B cell (primary cell): ENCODE measurements at regions of chr17 and their contacts with region 1.

Region 1: DNA sequence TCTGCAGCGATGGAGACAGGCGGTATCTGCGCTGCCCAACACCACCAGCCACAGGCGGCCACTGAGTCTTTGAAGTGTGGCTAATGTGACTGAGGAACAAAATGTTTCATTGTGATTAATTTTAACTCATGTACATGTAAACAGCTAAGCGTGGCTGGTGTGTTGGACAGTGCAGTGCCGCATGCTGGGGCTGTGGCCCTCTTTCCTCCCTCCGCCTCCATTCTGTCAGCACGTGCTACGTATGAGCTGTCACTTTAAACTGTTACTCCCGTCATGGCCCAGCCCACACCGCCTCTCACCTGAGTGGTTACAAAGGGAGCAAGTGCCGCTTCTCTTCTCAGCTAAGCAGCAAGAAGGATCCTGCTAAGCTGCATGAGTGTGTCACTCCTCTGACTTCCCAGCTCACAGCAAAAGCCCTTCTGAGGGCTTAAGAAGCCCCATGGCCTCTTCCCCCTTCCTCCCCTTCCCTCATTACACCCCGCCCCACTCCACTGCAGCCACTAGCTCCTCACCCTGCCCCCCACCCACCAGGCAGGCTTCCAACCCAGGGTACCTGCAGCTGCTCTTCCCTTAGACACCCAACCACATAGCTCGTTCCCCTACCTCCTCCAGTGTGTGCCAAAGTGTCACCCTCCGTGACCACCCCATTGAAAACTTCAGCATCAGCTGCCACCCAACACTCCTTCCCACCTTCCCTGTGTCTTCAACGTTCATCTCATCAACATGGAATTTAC is 15.0 kb downstream of the HASPIN start:
- DNase-seq: peak; percentile 44
- ATAC-seq: peak; percentile 44
- H3K4me3 ChIP-seq: no peak overlapping the region
- H3K4me3 Mint-ChIP-seq: no peak overlapping the region
- H3K27ac ChIP-seq: no peak overlapping the region
- H3K27ac Mint-ChIP-seq: peak overlapping the region; percentile 43
- H3K4me1 ChIP-seq: peaks cover 7 to 32% of the 10 kb centered on the region in 2 donors
- H3K4me1 Mint-ChIP-seq: peaks cover 38% of the 10 kb centered on the region
- H3K27me3 ChIP-seq: no peaks in the 10 kb centered on the region
- H3K27me3 Mint-ChIP-seq: no peaks in the 10 kb centered on the region
- CTCF ChIP-seq: no peak

Region 2: DNA sequence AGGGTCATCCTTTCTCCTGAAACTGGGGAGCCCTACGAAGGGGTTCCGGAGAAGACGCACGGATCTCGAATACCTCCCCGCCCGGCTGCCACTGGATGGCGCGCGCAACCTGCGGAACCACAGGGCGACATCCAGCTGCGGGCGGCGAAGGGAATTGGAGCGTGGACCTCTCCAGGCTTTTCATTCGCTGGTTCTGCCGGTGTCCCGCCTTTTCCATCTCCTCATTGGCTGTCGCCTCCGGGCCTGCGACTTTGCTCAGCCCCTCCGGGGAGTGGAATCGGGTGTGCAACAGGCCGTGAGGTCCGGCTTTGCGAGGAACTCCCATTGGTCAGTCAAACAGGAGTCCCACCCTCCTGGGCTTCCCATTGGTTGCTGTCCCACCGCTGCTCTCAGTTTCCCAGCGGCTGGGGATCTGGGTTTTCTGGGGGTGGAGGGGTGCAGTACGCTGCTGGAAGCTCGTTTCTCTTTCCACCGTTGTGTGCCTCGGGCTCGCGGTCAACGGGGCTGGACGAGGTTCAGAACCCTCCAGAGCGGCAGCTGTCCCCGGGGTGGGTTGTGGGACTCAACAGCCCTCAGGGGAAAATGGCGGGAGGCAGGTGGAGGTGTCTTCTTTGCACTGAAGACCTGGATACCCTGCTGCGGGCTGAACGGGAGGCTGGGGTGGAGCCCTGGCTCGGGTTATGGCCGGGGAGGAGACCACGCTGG is 689.8 kb before region 1 on chr17:
- CTCF ChIA-PET with region 1: interaction called, 3 read pairs
- POLR2A ChIA-PET with region 1: no interaction called
- intact Hi-C with region 1: loop called (anchors 5 kb)
- DNase-seq: peak; percentile 96
- ATAC-seq: peak; percentile 97
- H3K4me3 ChIP-seq: peak overlapping the region; percentile 36 to 84 (median 76)
- H3K4me3 Mint-ChIP-seq: peak overlapping the region; percentile 93
- H3K27ac ChIP-seq: peak overlapping the region in 1 of 2 donors; percentile 7
- H3K27ac Mint-ChIP-seq: peak overlapping the region; percentile 86
- H3K4me1 ChIP-seq: peaks cover 6 to 13% of the 10 kb centered on the region in 2 donors
- H3K4me1 Mint-ChIP-seq: peaks cover 7% of the 10 kb centered on the region
- H3K27me3 ChIP-seq: peaks cover 0 to under 1% (median 0%) of the 10 kb centered on the region in 4 experiments
- H3K27me3 Mint-ChIP-seq: no peaks in the 10 kb centered on the region
- CTCF ChIP-seq: peak; percentile 76

Region 3: GRCh38 chr17:3583456-3583855 is 155.3 kb before region 1 on chr17:
- CTCF ChIA-PET with region 1: no interaction called
- POLR2A ChIA-PET with region 1: no interaction called
- intact Hi-C with region 1: no loop called
- DNase-seq: no peak
- ATAC-seq: no peak
- H3K4me3 ChIP-seq: no peak overlapping the region
- H3K4me3 Mint-ChIP-seq: no peak overlapping the region
- H3K27ac ChIP-seq: no peak overlapping the region
- H3K27ac Mint-ChIP-seq: no peak overlapping the region
- H3K4me1 ChIP-seq: no peaks in the 10 kb centered on the region
- H3K4me1 Mint-ChIP-seq: no peaks in the 10 kb centered on the region
- H3K27me3 ChIP-seq: no peaks in the 10 kb centered on the region
- H3K27me3 Mint-ChIP-seq: no peaks in the 10 kb centered on the region
- CTCF ChIP-seq: no peak

Region 4: DNA sequence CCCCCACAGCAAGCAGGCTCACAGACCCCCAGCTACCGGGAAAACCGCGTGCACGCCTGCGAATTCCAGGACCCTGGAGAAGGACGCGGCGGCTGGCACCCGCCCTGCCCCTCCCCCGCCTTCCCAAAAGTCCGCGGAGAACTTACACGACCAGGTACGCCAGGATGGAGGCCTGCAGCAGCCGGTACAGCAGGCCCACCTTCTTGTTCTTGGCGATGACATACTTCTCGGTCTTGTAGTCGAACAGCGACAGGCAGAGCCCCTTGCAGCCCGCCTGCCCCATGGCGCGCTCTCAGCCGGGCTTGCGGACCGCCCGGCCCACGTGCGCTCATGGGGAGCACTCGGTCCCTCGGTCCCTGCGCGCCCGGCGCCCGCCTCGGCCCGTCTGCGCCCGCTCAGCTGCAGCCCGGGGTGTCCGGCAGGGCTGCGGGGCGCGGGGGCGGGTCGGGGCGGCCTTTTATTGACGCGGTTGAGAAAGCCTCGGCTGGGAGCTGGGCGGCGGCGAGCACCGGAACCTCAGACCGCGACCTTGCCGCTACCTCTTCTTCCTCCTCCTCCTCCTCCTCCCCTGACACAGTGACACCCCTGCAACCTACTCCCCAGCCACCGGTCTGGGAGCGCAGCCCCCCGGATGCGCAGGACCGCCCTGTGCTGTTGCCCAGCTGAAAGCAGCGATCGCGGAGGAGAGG is 42.9 kb before region 1 on chr17 and contains the start of gene P2RX5:
- CTCF ChIA-PET with region 1: interaction called, 52 read pairs
- POLR2A ChIA-PET with region 1: interaction called, 4 read pairs
- intact Hi-C with region 1: no loop called
- DNase-seq: peak; percentile 80
- ATAC-seq: peak; percentile 52
- H3K4me3 ChIP-seq: peak within 1 kb of the TSS; percentile 58 to 93 (median 83)
- H3K4me3 Mint-ChIP-seq: peak within 1 kb of the TSS; percentile 100
- H3K27ac ChIP-seq: peak within 1 kb of the TSS; percentile 76 to 91
- H3K27ac Mint-ChIP-seq: peak within 1 kb of the TSS; percentile 99
- H3K4me1 ChIP-seq: peaks cover 35 to 65% of the 10 kb centered on the region in 2 donors
- H3K4me1 Mint-ChIP-seq: peaks cover 61% of the 10 kb centered on the region
- H3K27me3 ChIP-seq: no peaks in the 10 kb centered on the region
- H3K27me3 Mint-ChIP-seq: no peaks in the 10 kb centered on the region
- CTCF ChIP-seq: no peak
- total RNA-seq, gene P2RX5: 405 and 410 TPM in 2 replicates

Region 5: DNA sequence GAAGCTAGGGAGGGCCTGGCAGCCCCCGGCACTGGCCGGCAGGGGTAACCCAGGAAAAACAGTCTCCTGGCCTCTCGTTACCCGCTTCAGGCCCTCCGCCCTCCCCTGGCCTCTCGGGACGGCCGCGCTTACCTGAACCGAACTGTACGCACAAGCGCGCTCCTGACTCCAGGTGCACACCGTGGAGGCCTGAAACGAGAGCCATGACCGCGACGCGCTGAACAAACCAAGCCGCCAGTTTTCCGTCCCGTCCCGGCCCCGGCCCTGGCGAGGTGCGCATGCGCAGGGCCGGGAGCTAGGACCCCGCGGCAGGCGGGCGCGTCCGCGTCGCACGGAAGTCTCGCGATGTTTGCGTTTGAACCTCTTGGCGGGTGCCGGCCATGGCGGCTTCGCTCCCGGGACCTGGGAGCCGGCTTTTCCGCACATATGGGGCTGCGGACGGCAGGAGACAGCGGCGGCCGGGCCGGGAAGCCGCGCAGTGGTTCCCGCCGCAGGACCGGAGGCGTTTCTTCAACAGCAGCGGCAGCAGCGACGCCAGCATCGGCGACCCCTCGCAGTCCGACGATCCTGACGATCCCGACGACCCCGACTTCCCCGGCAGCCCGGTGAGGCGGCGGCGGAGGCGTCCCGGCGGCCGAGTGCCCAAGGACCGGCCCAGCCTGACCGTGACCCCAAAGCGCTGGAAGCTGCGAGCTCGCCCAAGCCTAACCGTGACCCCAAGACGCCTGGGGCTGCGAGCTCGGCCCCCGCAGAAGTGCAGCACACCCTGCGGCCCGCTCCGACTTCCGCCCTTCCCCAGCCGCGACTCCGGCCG is 15.0 kb before region 1 on chr17 and contains the start of gene HASPIN:
- CTCF ChIA-PET with region 1: interaction called, 49 read pairs
- POLR2A ChIA-PET with region 1: no interaction called
- intact Hi-C with region 1: loop called (anchors 2 kb)
- DNase-seq: peak; percentile 95
- ATAC-seq: peak; percentile 72
- H3K4me3 ChIP-seq: peak within 1 kb of the TSS; percentile 76 to 96 (median 91)
- H3K4me3 Mint-ChIP-seq: peak within 1 kb of the TSS; percentile 96
- H3K27ac ChIP-seq: peak within 1 kb of the TSS; percentile 49 to 78
- H3K27ac Mint-ChIP-seq: peak within 1 kb of the TSS; percentile 94
- H3K4me1 ChIP-seq: peaks cover 48 to 69% of the 10 kb centered on the region in 2 donors
- H3K4me1 Mint-ChIP-seq: peaks cover 60% of the 10 kb centered on the region
- H3K27me3 ChIP-seq: no peaks in the 10 kb centered on the region
- H3K27me3 Mint-ChIP-seq: no peaks in the 10 kb centered on the region
- CTCF ChIP-seq: peak; percentile 26
- total RNA-seq, gene HASPIN: 2.4 and 3.1 TPM in 2 replicates

Region 6: DNA sequence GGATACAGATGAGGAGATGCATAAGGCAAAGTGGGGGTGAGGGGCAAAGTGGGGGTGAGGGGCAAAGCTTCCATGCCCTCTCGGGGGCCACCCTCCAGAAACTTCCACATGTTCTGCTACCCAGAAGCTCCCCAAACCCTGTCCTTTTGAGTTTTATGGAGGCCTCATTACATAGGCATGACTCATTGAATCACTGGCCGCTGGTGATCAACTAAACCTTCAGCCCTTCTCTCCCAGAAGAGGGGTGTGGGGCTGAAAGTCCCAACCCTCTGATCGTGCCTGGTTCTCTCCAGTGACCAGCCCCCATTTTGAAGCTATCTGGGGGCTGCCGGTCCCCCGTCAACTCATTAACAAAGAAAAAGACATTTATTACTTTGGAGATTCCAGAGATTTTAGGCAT is 34.8 kb after region 1 on chr17:
- CTCF ChIA-PET with region 1: interaction called, 176 read pairs
- POLR2A ChIA-PET with region 1: interaction called, 15 read pairs
- intact Hi-C with region 1: no loop called
- DNase-seq: no peak
- ATAC-seq: no peak
- H3K4me3 ChIP-seq: no peak overlapping the region
- H3K4me3 Mint-ChIP-seq: no peak overlapping the region
- H3K27ac ChIP-seq: no peak overlapping the region
- H3K27ac Mint-ChIP-seq: no peak overlapping the region
- H3K4me1 ChIP-seq: peaks cover 9 to 11% of the 10 kb centered on the region in 2 donors
- H3K4me1 Mint-ChIP-seq: peaks cover 18% of the 10 kb centered on the region
- H3K27me3 ChIP-seq: no peaks in the 10 kb centered on the region
- H3K27me3 Mint-ChIP-seq: no peaks in the 10 kb centered on the region
- CTCF ChIP-seq: no peak

Region 7: GRCh38 chr17:3812771-3813170 is 74.0 kb after region 1 on chr17:
- CTCF ChIA-PET with region 1: interaction called, 54 read pairs
- POLR2A ChIA-PET with region 1: interaction called, 3 read pairs
- intact Hi-C with region 1: no loop called
- DNase-seq: no peak
- ATAC-seq: no peak
- H3K4me3 ChIP-seq: no peak overlapping the region
- H3K4me3 Mint-ChIP-seq: no peak overlapping the region
- H3K27ac ChIP-seq: no peak overlapping the region
- H3K27ac Mint-ChIP-seq: no peak overlapping the region
- H3K4me1 ChIP-seq: peaks cover 13 to 33% of the 10 kb centered on the region in 2 donors
- H3K4me1 Mint-ChIP-seq: peaks cover 43% of the 10 kb centered on the region
- H3K27me3 ChIP-seq: no peaks in the 10 kb centered on the region
- H3K27me3 Mint-ChIP-seq: no peaks in the 10 kb centered on the region
- CTCF ChIP-seq: no peak

Region 8: DNA sequence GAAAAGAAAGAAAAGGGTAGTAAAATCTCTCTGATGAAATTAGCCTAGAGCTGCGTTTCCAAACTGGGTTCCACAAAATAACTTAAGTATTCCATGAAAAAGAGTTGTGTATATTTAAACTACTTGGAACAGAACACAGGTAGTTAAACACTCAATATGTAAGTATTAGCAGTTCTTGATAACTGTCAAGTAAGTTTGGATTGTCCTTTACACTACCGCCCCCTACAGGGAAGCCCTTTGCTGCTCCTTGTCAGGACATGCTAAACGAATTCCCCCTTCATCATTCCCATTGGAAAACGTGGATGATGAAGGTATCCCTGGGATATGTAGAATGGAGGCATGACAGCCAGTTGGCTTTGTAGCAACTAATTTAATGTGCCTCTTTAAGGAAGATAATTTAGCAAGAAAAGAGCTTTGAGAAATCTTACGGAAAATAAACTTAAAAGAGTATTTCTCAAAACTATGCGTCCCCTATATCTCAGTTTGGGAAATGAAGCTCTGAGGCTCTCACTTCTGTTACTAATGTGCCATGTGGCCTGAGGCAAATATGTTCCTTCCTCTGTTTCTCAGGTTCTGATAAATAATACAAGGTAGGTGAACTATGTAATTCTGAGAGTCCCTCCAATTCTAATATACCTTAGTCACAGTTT is 88.5 kb after region 1 on chr17:
- CTCF ChIA-PET with region 1: interaction called, 482 read pairs
- POLR2A ChIA-PET with region 1: no interaction called
- intact Hi-C with region 1: loop called (anchors 1 kb)
- DNase-seq: peak; percentile 80
- ATAC-seq: peak; percentile 62
- H3K4me3 ChIP-seq: no peak overlapping the region
- H3K4me3 Mint-ChIP-seq: no peak overlapping the region
- H3K27ac ChIP-seq: no peak overlapping the region
- H3K27ac Mint-ChIP-seq: no peak overlapping the region
- H3K4me1 ChIP-seq: no peaks in the 10 kb centered on the region
- H3K4me1 Mint-ChIP-seq: peaks cover 1% of the 10 kb centered on the region
- H3K27me3 ChIP-seq: no peaks in the 10 kb centered on the region
- H3K27me3 Mint-ChIP-seq: no peaks in the 10 kb centered on the region
- CTCF ChIP-seq: peak; percentile 95